ENCODE measurements at regions of chr17 and their contacts with region 1.

Region 1: GRCh38 chr17:32877164-32877764 is 340 bp upstream of the MYO1D start:
- DNase-seq: peak; percentile 96
- ATAC-seq: peak; percentile 98
- H3K4me3 Mint-ChIP-seq: peak overlapping the region; percentile 66
- H3K27ac Mint-ChIP-seq: peak overlapping the region; percentile 72
- H3K4me1 Mint-ChIP-seq: peaks cover 25% of the 10 kb centered on the region
- H3K27me3 Mint-ChIP-seq: peaks cover 2% of the 10 kb centered on the region

Region 2: GRCh38 chr17:32341857-32342602 is 535.2 kb before region 1 on chr17 and contains the start of gene C17orf75:
- CTCF ChIA-PET with region 1: no interaction called
- POLR2A ChIA-PET with region 1: no interaction called
- intact Hi-C with region 1: loop called in 1 of 2 experiments (anchors 2 kb)
- DNase-seq: peak; percentile 90
- ATAC-seq: peak; percentile 94
- H3K4me3 Mint-ChIP-seq: peak within 1 kb of the TSS; percentile 88
- H3K27ac Mint-ChIP-seq: peak within 1 kb of the TSS; percentile 96
- H3K4me1 Mint-ChIP-seq: peaks cover 17% of the 10 kb centered on the region
- H3K27me3 Mint-ChIP-seq: no peaks in the 10 kb centered on the region
- total RNA-seq, gene C17orf75: 21.9 to 34.0 TPM

Region 3: GRCh38 chr17:32486111-32486700 is 391.1 kb before region 1 on chr17:
- CTCF ChIA-PET with region 1: interaction called, 5 read pairs
- POLR2A ChIA-PET with region 1: no interaction called
- intact Hi-C with region 1: loop called in 1 of 2 experiments (anchors 1 kb)
- DNase-seq: peak; percentile 82
- ATAC-seq: peak; percentile 71
- H3K4me3 Mint-ChIP-seq: peak overlapping the region; percentile 54
- H3K27ac Mint-ChIP-seq: no peak overlapping the region
- H3K4me1 Mint-ChIP-seq: peaks cover 48% of the 10 kb centered on the region
- H3K27me3 Mint-ChIP-seq: no peaks in the 10 kb centered on the region

Region 4: GRCh38 chr17:32746698-32747097 is 130.6 kb before region 1 on chr17:
- CTCF ChIA-PET with region 1: no interaction called
- POLR2A ChIA-PET with region 1: no interaction called
- intact Hi-C with region 1: no loop called
- DNase-seq: no peak
- ATAC-seq: no peak
- H3K4me3 Mint-ChIP-seq: no peak overlapping the region
- H3K27ac Mint-ChIP-seq: no peak overlapping the region
- H3K4me1 Mint-ChIP-seq: no peaks in the 10 kb centered on the region
- H3K27me3 Mint-ChIP-seq: no peaks in the 10 kb centered on the region

Region 5: DNA sequence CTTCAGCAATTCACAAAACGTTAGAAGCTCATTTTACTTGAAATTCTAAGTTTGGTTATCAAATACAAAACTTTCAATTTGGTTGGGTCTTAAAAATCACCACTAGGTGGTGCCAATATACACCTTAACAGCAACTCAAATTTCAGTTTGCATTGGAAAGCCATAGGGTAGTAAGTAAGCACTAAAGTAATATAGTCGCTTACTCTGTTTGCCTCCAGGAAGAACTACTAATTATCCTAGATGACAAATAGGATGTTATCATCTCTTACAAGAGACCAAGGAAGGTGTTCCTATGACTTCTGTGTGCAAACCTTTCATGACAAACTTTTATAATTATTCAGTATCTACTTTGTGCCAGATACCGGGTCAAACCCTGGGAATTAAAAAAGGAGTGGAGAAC is 93.7 kb before region 1 on chr17:
- CTCF ChIA-PET with region 1: interaction called, 43 read pairs
- POLR2A ChIA-PET with region 1: no interaction called
- intact Hi-C with region 1: loop called (anchors 1 kb)
- DNase-seq: no peak
- ATAC-seq: peak; percentile 51
- H3K4me3 Mint-ChIP-seq: no peak overlapping the region
- H3K27ac Mint-ChIP-seq: no peak overlapping the region
- H3K4me1 Mint-ChIP-seq: no peaks in the 10 kb centered on the region
- H3K27me3 Mint-ChIP-seq: no peaks in the 10 kb centered on the region

Region 6: GRCh38 chr17:32903774-32904673 is 26.8 kb after region 1 on chr17:
- CTCF ChIA-PET with region 1: interaction called, 17 read pairs
- POLR2A ChIA-PET with region 1: no interaction called
- intact Hi-C with region 1: loop called in 1 of 2 experiments (anchors 2 kb)
- DNase-seq: peak; percentile 43
- ATAC-seq: peak; percentile 78
- H3K4me3 Mint-ChIP-seq: no peak overlapping the region
- H3K27ac Mint-ChIP-seq: no peak overlapping the region
- H3K4me1 Mint-ChIP-seq: peaks cover 10% of the 10 kb centered on the region
- H3K27me3 Mint-ChIP-seq: peaks cover 19% of the 10 kb centered on the region

Region 7: DNA sequence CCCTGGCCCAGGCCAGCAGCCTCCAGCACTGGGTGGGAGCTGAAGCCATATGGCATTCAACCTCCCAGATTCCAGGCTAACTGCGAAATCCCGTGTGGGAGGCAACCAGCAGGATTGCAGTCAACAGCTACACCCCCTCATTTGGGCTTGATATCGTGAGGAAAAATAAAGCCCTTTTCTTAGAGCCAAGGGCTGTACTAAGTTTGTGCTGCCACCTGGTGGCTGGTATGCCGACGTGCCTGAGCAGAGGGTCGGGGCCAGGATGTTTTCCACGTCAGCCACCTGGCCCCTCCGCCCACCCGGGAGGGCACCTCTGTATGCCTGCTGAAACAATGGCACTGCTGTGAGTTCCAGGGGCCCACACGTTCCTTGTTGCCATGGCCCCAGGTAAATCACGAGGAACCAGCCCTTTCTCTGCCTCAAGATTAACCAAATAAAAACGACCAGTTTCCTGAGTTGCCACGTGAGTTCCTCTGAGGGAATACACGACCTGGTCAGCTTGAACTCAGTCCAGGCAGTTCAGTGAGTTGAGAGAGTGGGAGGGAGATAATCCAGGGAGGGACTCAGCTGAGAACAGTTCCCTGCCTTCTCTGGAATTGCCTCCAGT is 59.7 kb after region 1 on chr17:
- CTCF ChIA-PET with region 1: interaction called, 17 read pairs
- POLR2A ChIA-PET with region 1: no interaction called
- intact Hi-C with region 1: no loop called
- DNase-seq: peak; percentile 84
- ATAC-seq: peak; percentile 90
- H3K4me3 Mint-ChIP-seq: no peak overlapping the region
- H3K27ac Mint-ChIP-seq: no peak overlapping the region
- H3K4me1 Mint-ChIP-seq: peaks cover 2% of the 10 kb centered on the region
- H3K27me3 Mint-ChIP-seq: peaks cover 20% of the 10 kb centered on the region

Region 8: DNA sequence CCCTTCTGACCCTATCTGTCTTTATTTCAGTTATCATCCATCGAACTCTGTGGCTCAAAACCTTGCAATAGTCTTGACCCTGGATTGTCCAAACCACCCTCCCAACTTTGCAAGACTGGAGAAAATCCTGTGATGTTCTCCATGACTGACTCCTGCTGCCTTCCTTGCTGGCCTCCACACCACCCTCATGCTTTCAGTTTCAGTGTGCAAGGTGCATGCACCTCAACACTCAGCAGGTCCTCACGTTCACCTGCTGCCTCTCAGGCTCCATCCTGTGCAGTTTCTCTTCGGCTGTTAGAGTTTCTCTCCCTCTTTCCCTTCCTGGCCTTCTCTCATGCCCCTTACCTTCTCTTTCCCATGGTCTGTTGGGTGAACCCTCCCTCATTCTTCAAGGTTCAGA is 475.3 kb after region 1 on chr17:
- CTCF ChIA-PET with region 1: no interaction called
- POLR2A ChIA-PET with region 1: no interaction called
- intact Hi-C with region 1: no loop called
- DNase-seq: no peak
- ATAC-seq: no peak
- H3K4me3 Mint-ChIP-seq: no peak overlapping the region
- H3K27ac Mint-ChIP-seq: no peak overlapping the region
- H3K4me1 Mint-ChIP-seq: no peaks in the 10 kb centered on the region
- H3K27me3 Mint-ChIP-seq: peaks cover 7% of the 10 kb centered on the region